ENCODE measurements at regions of chr7 and their contacts with region 1.

Region 1: GRCh38 chr7:117385340-117386109 is 41.8 kb downstream of the ASZ1 start:
- DNase-seq: no peak
- H3K4me3 Mint-ChIP-seq: no peak overlapping the region
- H3K27ac Mint-ChIP-seq: no peak overlapping the region
- H3K4me1 Mint-ChIP-seq: no peaks in the 10 kb centered on the region
- H3K27me3 Mint-ChIP-seq: no peaks in the 10 kb centered on the region

Region 2: GRCh38 chr7:117212969-117213877 is 172.3 kb before region 1 on chr7:
- intact Hi-C with region 1: loop called (anchors 5 kb)
- DNase-seq: peak; percentile 79
- H3K4me3 Mint-ChIP-seq: no peak overlapping the region
- H3K27ac Mint-ChIP-seq: no peak overlapping the region
- H3K4me1 Mint-ChIP-seq: no peaks in the 10 kb centered on the region
- H3K27me3 Mint-ChIP-seq: no peaks in the 10 kb centered on the region

Region 3: DNA sequence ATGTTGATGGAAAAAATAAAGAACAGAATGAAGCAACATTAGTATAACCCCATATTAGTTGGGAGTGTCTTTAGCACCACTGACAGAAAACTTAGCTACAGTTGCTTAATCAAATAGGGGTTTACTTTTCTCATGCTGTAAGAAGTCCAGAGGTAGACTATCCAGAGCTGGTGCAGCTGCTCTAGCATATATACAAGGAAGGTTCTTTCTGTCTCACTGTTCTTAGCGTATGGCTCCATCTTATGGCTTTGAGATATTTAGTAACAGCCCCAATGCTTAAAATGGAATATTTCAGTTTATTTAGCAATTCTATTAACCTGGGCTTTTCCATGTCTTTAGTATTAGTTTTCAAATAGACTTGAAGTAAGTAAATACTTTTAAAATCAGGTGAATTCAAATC is 47.5 kb before region 1 on chr7:
- intact Hi-C with region 1: loop called (anchors 1 kb)
- DNase-seq: no peak
- H3K4me3 Mint-ChIP-seq: no peak overlapping the region
- H3K27ac Mint-ChIP-seq: no peak overlapping the region
- H3K4me1 Mint-ChIP-seq: no peaks in the 10 kb centered on the region
- H3K27me3 Mint-ChIP-seq: peaks cover 2% of the 10 kb centered on the region